Calu3 (cell line): ENCODE measurements at regions of chr2 and their contacts with region 1.

Region 1: GRCh38 chr2:147558620-147559019 is 286.2 kb upstream of the ACVR2A start:
- DNase-seq: no peak
- H3K4me3 Mint-ChIP-seq: no peak overlapping the region
- H3K27ac Mint-ChIP-seq: no peak overlapping the region
- H3K4me1 Mint-ChIP-seq: no peaks in the 10 kb centered on the region
- H3K27me3 Mint-ChIP-seq: no peaks in the 10 kb centered on the region
- CTCF ChIP-seq: no peak

Region 2: GRCh38 chr2:147525819-147526489 is 32.7 kb before region 1 on chr2:
- CTCF ChIA-PET with region 1: no interaction called
- intact Hi-C with region 1: no loop called
- DNase-seq: no peak
- H3K4me3 Mint-ChIP-seq: no peak overlapping the region
- H3K27ac Mint-ChIP-seq: no peak overlapping the region
- H3K4me1 Mint-ChIP-seq: peaks cover 10% of the 10 kb centered on the region
- H3K27me3 Mint-ChIP-seq: no peaks in the 10 kb centered on the region
- CTCF ChIP-seq: no peak

Region 3: GRCh38 chr2:147538088-147538487 is 20.5 kb before region 1 on chr2:
- CTCF ChIA-PET with region 1: interaction called, 10 read pairs
- intact Hi-C with region 1: no loop called
- DNase-seq: no peak
- H3K4me3 Mint-ChIP-seq: no peak overlapping the region
- H3K27ac Mint-ChIP-seq: no peak overlapping the region
- H3K4me1 Mint-ChIP-seq: no peaks in the 10 kb centered on the region
- H3K27me3 Mint-ChIP-seq: no peaks in the 10 kb centered on the region
- CTCF ChIP-seq: no peak